ENCODE measurements at regions of chr2 and their contacts with region 1.

Region 1: DNA sequence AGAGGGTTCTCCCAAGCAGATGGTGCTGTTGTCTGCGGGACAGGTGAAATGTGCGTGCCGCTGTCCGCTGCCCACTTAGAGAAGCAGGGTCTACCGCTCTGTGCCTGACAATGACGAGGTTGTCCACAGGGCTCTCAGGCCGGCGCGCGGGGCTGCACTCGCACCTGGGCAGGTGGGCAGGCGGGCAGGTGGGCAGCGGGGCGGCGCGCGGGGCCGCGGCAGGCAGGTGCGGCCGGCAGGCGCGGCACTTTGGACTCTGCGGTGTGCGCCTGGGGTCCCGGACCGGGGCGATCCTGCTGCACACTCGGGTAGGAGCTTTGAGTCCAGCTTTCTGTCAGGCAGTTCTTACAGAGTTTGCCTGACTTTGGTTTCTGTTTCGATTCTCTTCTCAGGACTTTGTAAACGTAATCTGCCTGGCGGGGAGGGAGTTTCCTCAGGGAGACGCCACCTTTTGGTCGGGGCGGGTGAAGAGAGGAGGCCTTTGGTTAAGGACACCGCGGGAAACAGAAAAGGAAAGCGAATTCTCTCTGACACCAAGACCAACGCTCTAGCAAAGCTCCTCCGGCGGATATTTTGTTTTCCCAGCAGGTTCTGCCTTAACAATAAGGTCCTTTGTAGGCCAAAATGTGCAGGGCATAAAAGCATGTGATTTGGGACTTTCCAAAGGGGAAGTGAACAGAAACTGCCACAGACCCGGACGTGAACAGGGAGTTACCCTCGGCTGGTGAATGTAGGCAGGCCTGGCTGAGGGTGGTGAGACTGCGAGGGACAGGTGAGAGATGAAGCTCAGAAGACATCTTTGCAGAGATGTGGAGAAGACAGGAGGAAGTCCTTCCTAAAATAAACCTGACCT is at the start of gene IFIH1:
- DNase-seq: peak; percentile 94
- ATAC-seq: peak; percentile 89
- H3K4me3 ChIP-seq: peak within 1 kb of the TSS; percentile 90
- H3K27ac ChIP-seq: peak within 1 kb of the TSS; percentile 98
- H3K4me1 ChIP-seq: no peaks in the 10 kb centered on the region
- H3K27me3 ChIP-seq: no peaks in the 10 kb centered on the region
- CTCF ChIP-seq: peak; percentile 20 to 29 (median 21); a peak in 3 of 6 replicates
- EP300 ChIP-seq: peak; percentile 57 to 80
- POLR2A ChIP-seq: peak; percentile 80
- RAD21 ChIP-seq: 0 out of 2 replicates have a peak, but pooled peaks have one; percentile 7
- polyA plus RNA-seq, gene IFIH1: 12.5 to 16.4 TPM

Region 2: DNA sequence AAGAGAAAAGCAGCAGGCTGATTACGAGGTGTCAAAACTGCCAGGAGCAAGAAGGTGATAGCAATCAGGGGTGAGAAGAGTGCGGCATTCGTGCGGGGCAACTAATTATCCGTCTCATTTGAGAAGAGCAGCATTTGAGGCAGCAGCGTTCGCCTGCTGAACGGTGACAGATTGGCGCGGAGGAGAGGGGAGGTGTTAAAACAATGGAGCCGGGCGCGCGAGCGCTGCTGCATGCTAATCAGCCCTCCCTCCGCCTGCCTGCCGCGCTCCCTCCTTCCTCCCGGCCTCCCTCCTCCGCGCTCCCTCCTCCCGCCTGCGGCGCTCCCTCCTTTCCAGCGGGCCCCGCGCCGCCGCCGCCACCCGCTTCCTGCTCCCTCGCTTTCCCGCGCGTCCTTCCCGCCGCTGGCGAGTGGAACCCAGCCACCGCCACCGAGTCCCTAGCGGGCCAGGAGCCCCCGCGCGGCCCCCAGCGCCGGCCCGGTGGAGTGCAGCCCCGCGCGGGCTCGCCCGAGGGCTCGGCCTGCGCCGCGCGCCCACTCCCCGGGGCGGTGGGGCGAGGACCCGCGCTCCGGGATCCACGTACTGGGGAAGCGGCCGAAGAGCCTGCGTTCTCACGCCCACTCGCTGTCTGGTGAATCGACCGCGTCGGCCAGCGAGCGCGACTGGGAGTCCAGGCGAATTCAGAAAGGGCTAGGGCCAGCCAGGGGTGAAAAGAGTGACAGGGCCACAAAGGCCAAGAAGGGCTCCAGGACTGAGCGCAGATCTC is 1079.8 kb before region 1 on chr2:
- CTCF ChIA-PET with region 1: no interaction called
- POLR2A ChIA-PET with region 1: no interaction called
- RAD21 ChIA-PET with region 1: no interaction called
- SMC1A ChIA-PET with region 1: no interaction called
- in situ Hi-C with region 1: no loop called
- intact Hi-C with region 1: loop called (anchors 5 kb)
- DNase-seq: no peak
- ATAC-seq: peak; percentile 44
- H3K4me3 ChIP-seq: peak overlapping the region; percentile 76
- H3K27ac ChIP-seq: peak overlapping the region; percentile 31
- H3K4me1 ChIP-seq: peaks cover 20% of the 10 kb centered on the region
- H3K27me3 ChIP-seq: no peaks in the 10 kb centered on the region
- CTCF ChIP-seq: no peak
- EP300 ChIP-seq: no peak
- POLR2A ChIP-seq: 0 out of 2 replicates have a peak, but pooled peaks have one; percentile 29
- RAD21 ChIP-seq: no peak

Region 3: DNA sequence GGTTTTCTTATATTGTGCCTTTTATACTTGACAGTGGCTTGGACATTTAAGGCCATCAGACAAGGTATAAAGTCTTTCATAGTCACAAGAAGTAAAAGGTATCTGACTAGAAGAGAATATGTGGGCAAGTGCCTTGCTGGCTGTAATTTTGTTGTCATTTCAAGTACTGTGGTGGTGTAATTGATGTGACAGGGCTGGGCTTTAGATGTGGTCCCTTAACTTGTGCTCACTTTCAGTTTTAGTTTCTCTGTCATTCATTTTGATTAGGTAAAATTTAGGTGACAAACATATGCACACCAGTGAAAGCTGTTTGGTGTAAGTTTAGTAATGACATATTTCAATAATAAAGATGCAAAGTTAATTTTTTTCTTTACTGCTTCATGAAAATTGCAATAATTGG is 933.7 kb before region 1 on chr2:
- CTCF ChIA-PET with region 1: no interaction called
- POLR2A ChIA-PET with region 1: no interaction called
- RAD21 ChIA-PET with region 1: no interaction called
- SMC1A ChIA-PET with region 1: no interaction called
- in situ Hi-C with region 1: loop called (anchors 25 kb)
- intact Hi-C with region 1: loop called (anchors 10 kb)
- DNase-seq: peak; percentile 49
- ATAC-seq: peak; percentile 88
- H3K4me3 ChIP-seq: no peak overlapping the region
- H3K27ac ChIP-seq: no peak overlapping the region
- H3K4me1 ChIP-seq: peaks cover 37% of the 10 kb centered on the region
- H3K27me3 ChIP-seq: no peaks in the 10 kb centered on the region
- CTCF ChIP-seq: no peak
- EP300 ChIP-seq: peak in 1 of 2 experiments; percentile 75; a peak in 2 of 4 replicates
- POLR2A ChIP-seq: no peak
- RAD21 ChIP-seq: no peak

Region 4: GRCh38 chr2:162333968-162334367 is 15.4 kb after region 1 on chr2:
- CTCF ChIA-PET with region 1: interaction called, 55 read pairs
- POLR2A ChIA-PET with region 1: interaction called, 9 read pairs
- RAD21 ChIA-PET with region 1: interaction called, 33 read pairs
- SMC1A ChIA-PET with region 1: interaction called, 15 read pairs
- in situ Hi-C with region 1: no loop called
- intact Hi-C with region 1: no loop called
- DNase-seq: no peak
- ATAC-seq: peak; percentile 91
- H3K4me3 ChIP-seq: no peak overlapping the region
- H3K27ac ChIP-seq: no peak overlapping the region
- H3K4me1 ChIP-seq: no peaks in the 10 kb centered on the region
- H3K27me3 ChIP-seq: no peaks in the 10 kb centered on the region
- CTCF ChIP-seq: peak; percentile 55 to 81 (median 62)
- EP300 ChIP-seq: no peak
- POLR2A ChIP-seq: no peak
- RAD21 ChIP-seq: peak; percentile 71

Region 5: DNA sequence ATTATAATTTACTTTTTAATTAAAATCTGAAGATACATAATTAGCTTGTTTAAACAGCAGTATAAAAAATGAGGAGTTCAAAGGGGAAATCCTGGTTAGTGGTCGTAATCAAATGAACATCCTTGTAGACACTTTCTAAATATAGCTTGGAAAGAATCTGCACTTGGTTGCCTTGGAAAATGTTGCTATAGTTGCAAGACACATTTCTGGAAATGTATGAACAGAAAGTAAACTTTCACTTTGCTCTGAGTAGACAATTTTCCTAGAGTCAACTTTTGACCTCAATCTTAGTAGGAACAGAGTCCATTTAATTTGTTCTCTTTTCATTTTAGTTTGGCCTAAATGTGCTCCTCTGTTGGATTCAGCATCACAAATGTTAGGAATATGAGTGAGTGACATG is 63.7 kb after region 1 on chr2:
- CTCF ChIA-PET with region 1: no interaction called
- POLR2A ChIA-PET with region 1: no interaction called
- RAD21 ChIA-PET with region 1: no interaction called
- SMC1A ChIA-PET with region 1: no interaction called
- in situ Hi-C with region 1: no loop called
- intact Hi-C with region 1: no loop called
- DNase-seq: no peak
- ATAC-seq: no peak
- H3K4me3 ChIP-seq: no peak overlapping the region
- H3K27ac ChIP-seq: no peak overlapping the region
- H3K4me1 ChIP-seq: no peaks in the 10 kb centered on the region
- H3K27me3 ChIP-seq: no peaks in the 10 kb centered on the region
- CTCF ChIP-seq: no peak
- EP300 ChIP-seq: no peak
- POLR2A ChIP-seq: no peak
- RAD21 ChIP-seq: no peak

Region 6: GRCh38 chr2:162731917-162732804 is 413.6 kb after region 1 on chr2:
- CTCF ChIA-PET with region 1: no interaction called
- POLR2A ChIA-PET with region 1: no interaction called
- RAD21 ChIA-PET with region 1: no interaction called
- SMC1A ChIA-PET with region 1: interaction called, 3 read pairs
- in situ Hi-C with region 1: no loop called
- intact Hi-C with region 1: loop called (anchors 5 kb)
- DNase-seq: peak; percentile 57
- ATAC-seq: peak; percentile 92
- H3K4me3 ChIP-seq: peak overlapping the region; percentile 60; the same call in 1 of the 2 replicates
- H3K27ac ChIP-seq: peak overlapping the region; percentile 88
- H3K4me1 ChIP-seq: peaks cover 26% of the 10 kb centered on the region
- H3K27me3 ChIP-seq: no peaks in the 10 kb centered on the region
- CTCF ChIP-seq: no peak
- EP300 ChIP-seq: no peak
- POLR2A ChIP-seq: no peak
- RAD21 ChIP-seq: no peak

Region 7: GRCh38 chr2:162874412-162874811 is 555.9 kb after region 1 on chr2:
- CTCF ChIA-PET with region 1: no interaction called
- POLR2A ChIA-PET with region 1: no interaction called
- RAD21 ChIA-PET with region 1: no interaction called
- SMC1A ChIA-PET with region 1: no interaction called
- in situ Hi-C with region 1: no loop called
- intact Hi-C with region 1: no loop called
- DNase-seq: no peak
- ATAC-seq: no peak
- H3K4me3 ChIP-seq: no peak overlapping the region
- H3K27ac ChIP-seq: no peak overlapping the region
- H3K4me1 ChIP-seq: no peaks in the 10 kb centered on the region
- H3K27me3 ChIP-seq: no peaks in the 10 kb centered on the region
- CTCF ChIP-seq: no peak
- EP300 ChIP-seq: no peak
- POLR2A ChIP-seq: no peak
- RAD21 ChIP-seq: no peak

Region 8: GRCh38 chr2:162989507-162989906 is 671.0 kb after region 1 on chr2:
- CTCF ChIA-PET with region 1: no interaction called
- POLR2A ChIA-PET with region 1: no interaction called
- RAD21 ChIA-PET with region 1: no interaction called
- SMC1A ChIA-PET with region 1: no interaction called
- in situ Hi-C with region 1: no loop called
- intact Hi-C with region 1: no loop called
- DNase-seq: no peak
- ATAC-seq: no peak
- H3K4me3 ChIP-seq: no peak overlapping the region
- H3K27ac ChIP-seq: no peak overlapping the region
- H3K4me1 ChIP-seq: no peaks in the 10 kb centered on the region
- H3K27me3 ChIP-seq: no peaks in the 10 kb centered on the region
- CTCF ChIP-seq: no peak
- EP300 ChIP-seq: no peak
- POLR2A ChIP-seq: no peak
- RAD21 ChIP-seq: no peak